Activated CD8-positive, alpha-beta T cell treated with anti-CD3 and anti-CD28 coated beads, Interleukin-2, amount 10 ng/mL, durations not matched to agents 7 days and 5 days (primary cell): ENCODE measurements at regions of chr16 and their contacts with region 1.

Region 1: GRCh38 chr16:67685388-67686112 is 18.9 kb downstream of the C16orf86 start:
- DNase-seq: no peak
- ATAC-seq: no peak
- H3K4me3 Mint-ChIP-seq: no peak overlapping the region
- H3K27ac Mint-ChIP-seq: no peak overlapping the region
- H3K4me1 Mint-ChIP-seq: no peaks in the 10 kb centered on the region
- H3K27me3 Mint-ChIP-seq: no peaks in the 10 kb centered on the region

Region 2: DNA sequence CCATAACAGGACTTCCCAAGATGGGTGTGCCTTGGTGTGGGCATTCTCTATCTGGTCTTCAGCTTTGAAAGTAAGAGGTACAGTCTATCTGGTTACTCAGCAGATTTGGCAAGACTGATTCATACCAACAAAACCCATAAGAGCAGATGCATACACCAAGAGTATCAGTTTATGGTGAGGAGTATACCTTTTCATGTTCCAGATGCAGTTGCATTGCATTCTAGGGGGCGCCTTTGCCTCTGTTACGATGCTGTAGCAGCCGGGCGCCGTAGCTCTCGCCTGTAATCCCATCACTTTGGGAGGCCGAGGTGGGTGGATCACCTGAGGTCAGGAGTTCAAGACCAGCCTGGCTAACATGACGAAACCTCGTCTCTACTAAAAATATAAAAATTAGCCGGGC is 71.7 kb before region 1 on chr16:
- CTCF ChIA-PET with region 1: no interaction called
- POLR2A ChIA-PET with region 1: no interaction called
- DNase-seq: peak; percentile 24
- ATAC-seq: no peak
- H3K4me3 Mint-ChIP-seq: no peak overlapping the region
- H3K27ac Mint-ChIP-seq: no peak overlapping the region
- H3K4me1 Mint-ChIP-seq: no peaks in the 10 kb centered on the region
- H3K27me3 Mint-ChIP-seq: no peaks in the 10 kb centered on the region

Region 3: GRCh38 chr16:67667817-67668494 is 17.6 kb before region 1 on chr16:
- CTCF ChIA-PET with region 1: interaction called, 36 read pairs
- POLR2A ChIA-PET with region 1: no interaction called
- DNase-seq: peak; percentile 90
- ATAC-seq: peak; percentile 85
- H3K4me3 Mint-ChIP-seq: peak overlapping the region; percentile 83
- H3K27ac Mint-ChIP-seq: peak overlapping the region; percentile 55
- H3K4me1 Mint-ChIP-seq: peaks cover 31% of the 10 kb centered on the region
- H3K27me3 Mint-ChIP-seq: no peaks in the 10 kb centered on the region

Region 4: DNA sequence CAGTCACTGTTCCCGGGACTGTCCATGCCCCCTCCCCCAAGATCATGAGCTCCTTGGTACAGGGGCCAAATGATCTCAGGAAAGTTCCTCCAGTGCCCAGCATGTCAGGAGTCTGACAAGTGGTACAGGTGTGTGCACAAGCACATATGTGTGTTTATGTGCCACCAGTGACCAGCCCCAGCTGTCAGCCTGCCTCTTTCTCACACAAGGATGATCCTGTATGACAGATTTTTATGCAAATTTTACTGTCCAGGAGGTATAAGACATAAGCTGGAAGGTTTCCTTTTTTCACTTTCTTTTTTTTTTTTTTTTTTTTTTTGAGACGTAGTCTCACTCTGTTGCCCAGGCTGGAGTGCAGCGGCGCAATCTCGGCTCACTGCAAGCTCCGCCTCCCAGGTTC is 64.9 kb after region 1 on chr16:
- CTCF ChIA-PET with region 1: no interaction called
- POLR2A ChIA-PET with region 1: no interaction called
- DNase-seq: no peak
- ATAC-seq: no peak
- H3K4me3 Mint-ChIP-seq: no peak overlapping the region
- H3K27ac Mint-ChIP-seq: no peak overlapping the region
- H3K4me1 Mint-ChIP-seq: no peaks in the 10 kb centered on the region
- H3K27me3 Mint-ChIP-seq: no peaks in the 10 kb centered on the region